ENCODE measurements at regions of chr13 and their contacts with region 1.

Region 1: GRCh38 chr13:74329962-74330361 is 195.8 kb upstream of the KLF12 start:
- DNase-seq: no peak
- ATAC-seq: no peak
- H3K4me3 ChIP-seq: no peak overlapping the region
- H3K4me3 Mint-ChIP-seq: no peak overlapping the region
- H3K27ac ChIP-seq: no peak overlapping the region
- H3K27ac Mint-ChIP-seq: no peak overlapping the region
- H3K4me1 ChIP-seq: no peaks in the 10 kb centered on the region
- H3K4me1 Mint-ChIP-seq: no peaks in the 10 kb centered on the region
- H3K27me3 ChIP-seq: no peaks in the 10 kb centered on the region
- H3K27me3 Mint-ChIP-seq: no peaks in the 10 kb centered on the region
- CTCF ChIP-seq: no peak

Region 2: DNA sequence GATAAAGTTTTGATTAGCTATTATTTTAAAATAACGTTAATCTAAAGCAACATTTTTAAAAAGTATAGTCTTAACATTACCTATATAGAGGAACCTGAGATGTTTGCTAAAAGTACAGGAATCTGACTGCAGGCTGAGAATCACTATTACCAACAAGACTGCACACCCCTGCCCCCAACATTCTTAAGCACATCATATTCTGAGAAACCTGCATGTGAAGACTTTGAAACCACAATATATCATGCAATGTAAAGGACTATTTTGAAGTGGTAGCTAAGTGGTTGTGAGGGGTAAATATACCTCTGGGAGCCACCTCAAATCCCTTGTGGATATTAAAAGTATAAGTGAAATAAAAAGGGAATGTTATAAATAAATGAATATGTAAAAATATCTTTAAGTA is 76.8 kb before region 1 on chr13:
- CTCF ChIA-PET with region 1: no interaction called
- POLR2A ChIA-PET with region 1: no interaction called
- intact Hi-C with region 1: no loop called
- DNase-seq: no peak
- ATAC-seq: no peak
- H3K4me3 ChIP-seq: no peak overlapping the region
- H3K4me3 Mint-ChIP-seq: no peak overlapping the region
- H3K27ac ChIP-seq: no peak overlapping the region
- H3K27ac Mint-ChIP-seq: no peak overlapping the region
- H3K4me1 ChIP-seq: peaks cover 69% of the 10 kb centered on the region
- H3K4me1 Mint-ChIP-seq: peaks cover 90% of the 10 kb centered on the region
- H3K27me3 ChIP-seq: no peaks in the 10 kb centered on the region
- H3K27me3 Mint-ChIP-seq: no peaks in the 10 kb centered on the region
- CTCF ChIP-seq: no peak

Region 3: DNA sequence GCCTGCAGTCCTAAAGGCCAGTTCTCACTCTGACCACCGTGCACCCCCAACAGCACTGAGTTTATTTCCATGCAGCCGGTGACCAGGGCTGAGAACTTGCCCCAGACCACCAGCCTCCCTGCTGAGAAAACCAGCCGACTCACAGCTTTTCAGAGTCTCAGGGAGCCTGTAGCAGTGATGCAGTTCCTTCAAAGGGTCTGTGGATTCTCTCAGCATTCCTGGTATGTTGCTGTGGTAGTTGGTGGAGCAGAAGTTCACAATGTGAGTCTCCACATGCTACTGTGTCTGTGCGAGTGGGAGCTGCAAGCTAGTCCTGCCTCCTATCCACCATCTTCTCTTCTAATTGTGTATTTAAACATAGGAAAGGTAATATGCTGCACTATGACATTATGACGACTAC is 59.1 kb after region 1 on chr13:
- CTCF ChIA-PET with region 1: no interaction called
- POLR2A ChIA-PET with region 1: no interaction called
- intact Hi-C with region 1: loop called in 1 of 2 experiments (anchors 5 kb)
- DNase-seq: no peak
- ATAC-seq: no peak
- H3K4me3 ChIP-seq: no peak overlapping the region
- H3K4me3 Mint-ChIP-seq: no peak overlapping the region
- H3K27ac ChIP-seq: no peak overlapping the region
- H3K27ac Mint-ChIP-seq: no peak overlapping the region
- H3K4me1 ChIP-seq: no peaks in the 10 kb centered on the region
- H3K4me1 Mint-ChIP-seq: no peaks in the 10 kb centered on the region
- H3K27me3 ChIP-seq: no peaks in the 10 kb centered on the region
- H3K27me3 Mint-ChIP-seq: no peaks in the 10 kb centered on the region
- CTCF ChIP-seq: no peak

Measured in CD8-positive, alpha-beta T cell (primary cell).